PC-3 (cell line): ENCODE measurements at regions of chr1 and their contacts with region 1.

Region 1: GRCh38 chr1:52904927-52905698 is 16.4 kb downstream of the ECHDC2 start:
- DNase-seq: peak; percentile 37
- ATAC-seq: peak; percentile 72
- H3K4me3 ChIP-seq: no peak overlapping the region
- H3K27ac ChIP-seq: no peak overlapping the region
- H3K4me1 ChIP-seq: peaks cover 4% of the 10 kb centered on the region
- H3K27me3 ChIP-seq: no peaks in the 10 kb centered on the region
- CTCF ChIP-seq: peak; percentile 67

Region 2: GRCh38 chr1:53148123-53148522 is 243.0 kb after region 1 on chr1:
- CTCF ChIA-PET with region 1: interaction called, 10 read pairs
- POLR2A ChIA-PET with region 1: no interaction called
- intact Hi-C with region 1: no loop called
- DNase-seq: peak; percentile 86
- ATAC-seq: peak; percentile 37; the same call in 1 of the 2 replicates
- H3K4me3 ChIP-seq: no peak overlapping the region
- H3K27ac ChIP-seq: peak overlapping the region; percentile 98
- H3K4me1 ChIP-seq: peaks cover 41% of the 10 kb centered on the region
- H3K27me3 ChIP-seq: no peaks in the 10 kb centered on the region
- CTCF ChIP-seq: no peak

Region 3: DNA sequence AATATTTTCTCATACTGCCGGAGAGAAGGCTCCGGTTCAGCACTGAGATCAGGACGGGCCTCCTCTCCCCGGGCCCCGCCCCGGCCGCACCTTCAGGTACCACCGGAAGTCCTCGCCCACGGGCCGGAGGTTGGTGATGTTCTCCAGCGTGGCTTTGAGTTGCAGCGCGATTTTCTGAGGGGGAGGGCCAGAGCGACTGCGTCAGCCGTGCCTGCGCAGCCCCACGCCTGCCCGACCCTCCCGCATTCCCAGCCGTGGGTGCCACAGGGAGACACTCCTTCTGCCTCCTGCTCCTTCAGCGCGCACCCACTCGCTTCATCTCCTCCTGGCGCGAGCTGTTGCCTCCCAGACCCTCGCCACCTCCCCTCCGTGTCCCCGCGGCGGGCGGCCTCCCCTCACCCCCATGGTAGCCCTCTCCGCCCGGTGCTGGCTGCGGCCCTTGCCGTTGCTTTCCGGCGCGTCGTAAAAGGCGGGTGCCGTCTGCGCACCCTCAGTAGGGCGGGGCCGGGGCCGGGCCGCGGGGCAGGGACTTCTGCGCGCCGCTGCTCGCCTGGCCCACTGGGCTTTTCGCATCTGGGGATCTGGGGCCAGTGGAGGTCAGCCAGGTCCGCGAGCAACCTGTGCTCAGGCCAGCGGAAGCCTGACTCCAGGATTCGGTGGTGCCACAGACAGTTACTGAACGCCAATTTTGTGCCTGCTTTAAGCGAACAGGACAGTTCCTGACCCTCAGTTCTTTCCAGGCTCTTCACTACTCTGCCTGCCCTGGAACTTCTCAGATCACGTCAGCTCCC is 315.3 kb after region 1 on chr1 and contains the start of gene CZIB:
- CTCF ChIA-PET with region 1: no interaction called
- POLR2A ChIA-PET with region 1: no interaction called
- intact Hi-C with region 1: no loop called
- DNase-seq: peak; percentile 93
- ATAC-seq: peak; percentile 93
- H3K4me3 ChIP-seq: peak within 1 kb of the TSS; percentile 79
- H3K27ac ChIP-seq: peak within 1 kb of the TSS; percentile 81
- H3K4me1 ChIP-seq: peaks cover 16% of the 10 kb centered on the region
- H3K27me3 ChIP-seq: no peaks in the 10 kb centered on the region
- CTCF ChIP-seq: no peak
- total RNA-seq, gene CZIB: 44.1 and 47.7 TPM in 2 replicates